Common myeloid progenitor, CD34-positive (primary cell): ENCODE measurements at regions of chr1 and their contacts with region 1.

Region 1: DNA sequence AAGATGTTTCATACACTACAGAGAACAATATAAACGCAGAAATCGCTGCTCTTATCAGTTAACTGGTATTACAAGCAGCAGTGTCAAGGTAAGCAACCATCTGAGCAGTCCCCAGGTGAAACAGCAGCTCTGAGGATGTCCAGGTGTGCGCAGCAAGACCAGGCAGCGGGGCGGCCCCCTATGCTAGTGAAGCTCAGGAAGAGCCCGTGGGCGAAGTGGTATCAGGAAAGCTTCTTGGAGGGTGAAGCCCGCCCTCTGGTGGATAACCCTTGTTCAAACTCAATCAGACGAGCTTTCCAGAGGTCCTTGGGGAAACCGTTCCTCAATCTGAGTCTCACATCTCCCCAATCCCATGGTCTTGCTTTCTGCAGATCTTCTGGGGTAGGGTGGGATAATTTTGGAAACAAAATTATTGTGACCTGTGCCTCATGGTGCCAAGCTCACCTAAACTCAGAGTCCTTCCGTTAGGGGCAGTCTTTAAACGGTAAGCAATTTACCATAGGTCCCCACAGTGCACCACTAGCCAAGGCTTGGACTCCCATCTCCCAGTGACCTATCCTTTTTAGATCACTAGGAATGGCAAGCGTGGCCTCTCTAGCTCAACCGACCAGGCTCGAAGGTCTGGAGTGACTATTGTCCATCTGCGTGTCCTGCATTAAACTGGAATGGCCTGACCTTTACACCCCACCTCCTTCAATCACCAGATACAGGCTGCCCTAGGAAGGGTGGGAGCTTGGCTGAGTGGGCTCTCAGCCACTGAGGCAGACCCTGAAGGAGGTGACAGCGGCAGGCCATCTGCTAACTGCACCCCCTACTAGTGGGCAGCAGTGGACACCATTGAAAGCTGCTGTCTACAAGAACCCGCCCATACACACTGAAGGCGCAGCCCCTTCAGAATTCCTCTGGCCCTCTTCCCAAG is 13.6 kb upstream of the FAM110D start:
- DNase-seq: peak; percentile 71 to 84 (median 82)
- H3K4me3 ChIP-seq: peak overlapping the region in 1 of 7 experiments; percentile 37
- H3K27ac ChIP-seq: no peak overlapping the region
- H3K4me1 ChIP-seq: peaks cover 0 to 3% (median 3%) of the 10 kb centered on the region in 4 experiments
- H3K27me3 ChIP-seq: peaks cover 0 to 10% (median 0%) of the 10 kb centered on the region in 5 experiments

Region 2: DNA sequence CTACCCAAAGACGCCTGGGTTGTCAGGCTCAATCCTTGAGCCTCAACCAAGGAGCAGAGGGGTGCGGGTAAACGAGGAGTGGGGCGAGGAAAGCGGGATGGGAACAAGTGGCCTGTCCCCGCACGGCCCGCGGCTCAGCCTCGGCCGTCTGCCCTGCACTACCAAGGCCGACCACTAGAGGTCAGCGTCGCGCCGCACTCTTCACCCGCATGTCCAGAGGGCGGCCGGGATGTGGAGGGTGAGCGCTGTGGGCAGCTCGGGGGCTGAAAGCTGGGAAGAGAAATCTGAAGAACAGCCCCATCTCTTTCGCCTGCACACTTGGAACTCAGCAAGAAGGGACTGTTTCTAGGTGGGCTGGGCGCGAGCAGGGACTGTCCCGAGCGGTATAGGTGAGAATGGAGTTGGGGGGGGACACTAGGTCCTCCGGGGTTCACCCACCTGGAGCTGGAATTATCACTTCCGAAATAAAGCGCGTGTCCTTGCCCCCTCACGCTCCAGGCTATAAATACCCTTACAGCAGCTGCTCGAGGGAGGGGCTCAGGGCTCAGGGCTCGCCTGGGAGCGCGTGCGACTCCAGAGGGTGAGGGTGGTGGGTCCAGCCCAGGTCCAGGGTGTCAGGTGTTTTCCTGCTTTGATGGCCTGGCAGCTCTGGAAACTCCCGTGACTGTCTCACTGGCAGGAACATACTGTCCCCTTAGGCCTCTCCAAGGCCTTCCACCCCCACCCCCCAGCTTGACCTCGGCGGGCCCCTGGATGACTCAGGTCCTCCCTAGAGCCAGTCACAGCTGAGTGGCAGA is 109.1 kb before region 1 on chr1:
- CTCF ChIA-PET with region 1: interaction called, 19 read pairs
- POLR2A ChIA-PET with region 1: no interaction called
- DNase-seq: peak; percentile 57 to 65 (median 61)
- H3K4me3 ChIP-seq: peak overlapping the region; percentile 49 to 93 (median 75)
- H3K27ac ChIP-seq: peak overlapping the region; percentile 40 to 84
- H3K4me1 ChIP-seq: peaks cover 0 to 20% (median 14%) of the 10 kb centered on the region in 4 experiments
- H3K27me3 ChIP-seq: peaks cover 0 to 15% (median 8%) of the 10 kb centered on the region in 5 experiments

Region 3: GRCh38 chr1:26111530-26112406 is 33.5 kb before region 1 on chr1 and contains the start of gene PDIK1L:
- CTCF ChIA-PET with region 1: interaction called, 188 read pairs
- POLR2A ChIA-PET with region 1: interaction called, 5 read pairs
- DNase-seq: peak; percentile 96 to 99 (median 99)
- H3K4me3 ChIP-seq: peak within 1 kb of the TSS; percentile 44 to 99 (median 91)
- H3K27ac ChIP-seq: peak within 1 kb of the TSS; percentile 68 to 87
- H3K4me1 ChIP-seq: peaks cover 8 to 24% (median 20%) of the 10 kb centered on the region in 4 experiments
- H3K27me3 ChIP-seq: no peaks in the 10 kb centered on the region

Region 4: GRCh38 chr1:26126321-26127084 is 18.8 kb before region 1 on chr1:
- CTCF ChIA-PET with region 1: interaction called, 188 read pairs
- POLR2A ChIA-PET with region 1: interaction called, 7 read pairs
- DNase-seq: peak; percentile 92 to 99 (median 97)
- H3K4me3 ChIP-seq: peak overlapping the region in 5 of 7 experiments; percentile 27 to 71 (median 48)
- H3K27ac ChIP-seq: peak overlapping the region; percentile 93 to 97
- H3K4me1 ChIP-seq: peaks cover 45 to 83% (median 64%) of the 10 kb centered on the region in 4 experiments
- H3K27me3 ChIP-seq: no peaks in the 10 kb centered on the region

Region 5: DNA sequence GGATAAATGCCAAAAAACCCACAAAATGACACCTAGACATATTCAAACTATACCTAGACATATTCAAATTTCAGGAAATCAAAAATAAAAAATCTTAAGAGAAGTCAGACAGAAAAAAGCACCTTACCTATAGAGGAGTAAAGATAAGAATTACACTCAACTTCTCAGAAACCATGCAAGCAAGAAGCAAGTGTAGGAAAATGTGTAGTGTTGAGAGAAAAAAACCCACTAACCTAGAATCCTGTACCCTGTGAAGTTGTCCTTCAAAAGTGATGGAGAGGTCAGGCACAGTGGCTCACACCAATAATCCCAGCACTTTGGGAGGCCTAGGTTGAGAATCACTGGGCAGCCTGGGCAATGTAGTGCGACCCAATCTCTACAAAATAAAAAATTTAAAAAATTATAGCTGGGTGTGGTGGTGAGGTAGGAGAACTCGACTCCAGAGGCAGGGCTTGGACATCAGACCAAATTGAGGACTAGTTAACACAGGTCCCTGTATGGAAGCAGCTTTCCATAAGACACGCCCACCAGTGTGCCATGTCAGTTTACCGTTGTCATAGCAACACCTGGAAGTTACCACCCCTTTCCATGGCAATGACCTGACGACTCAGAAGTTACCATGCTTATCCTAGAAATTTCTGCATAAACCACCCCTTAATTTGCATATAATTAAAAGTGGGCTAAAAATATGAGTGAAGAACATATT is 13.0 kb before region 1 on chr1:
- CTCF ChIA-PET with region 1: interaction called, 188 read pairs
- POLR2A ChIA-PET with region 1: interaction called, 7 read pairs
- DNase-seq: peak in 2 of 3 donors; percentile 52 to 57
- H3K4me3 ChIP-seq: no peak overlapping the region
- H3K27ac ChIP-seq: no peak overlapping the region
- H3K4me1 ChIP-seq: peaks cover 4 to 27% (median 22%) of the 10 kb centered on the region in 4 experiments
- H3K27me3 ChIP-seq: no peaks in the 10 kb centered on the region

Region 6: GRCh38 chr1:26161415-26162219 is 16.3 kb after region 1 on chr1:
- CTCF ChIA-PET with region 1: interaction called, 56 read pairs
- POLR2A ChIA-PET with region 1: interaction called, 6 read pairs
- DNase-seq: peak; percentile 48 to 75 (median 60)
- H3K4me3 ChIP-seq: peak overlapping the region; percentile 46 to 74 (median 64)
- H3K27ac ChIP-seq: peak overlapping the region in 1 of 2 experiments; percentile 5
- H3K4me1 ChIP-seq: peaks cover 0 to 60% (median 43%) of the 10 kb centered on the region in 4 experiments
- H3K27me3 ChIP-seq: peaks cover 0 to 22% (median 11%) of the 10 kb centered on the region in 5 experiments